Activated B cell treated with CpG ODN at 0.5 μM for 24 hours (primary cell): ENCODE measurements at regions of chr12 and their contacts with region 1.

Region 1: GRCh38 chr12:14910090-14910915 is 24.6 kb upstream of the MGP start:
- DNase-seq: no peak
- ATAC-seq: no peak
- H3K4me3 Mint-ChIP-seq: no peak overlapping the region
- H3K27ac Mint-ChIP-seq: no peak overlapping the region
- H3K4me1 Mint-ChIP-seq: peaks cover 4% of the 10 kb centered on the region
- H3K27me3 Mint-ChIP-seq: no peaks in the 10 kb centered on the region
- CTCF ChIP-seq: no peak

Region 2: GRCh38 chr12:14252697-14253096 is 657.6 kb before region 1 on chr12:
- CTCF ChIA-PET with region 1: no interaction called
- POLR2A ChIA-PET with region 1: interaction called, 10 read pairs
- intact Hi-C with region 1: no loop called
- DNase-seq: no peak
- ATAC-seq: no peak
- H3K4me3 Mint-ChIP-seq: no peak overlapping the region
- H3K27ac Mint-ChIP-seq: peak overlapping the region; percentile 56
- H3K4me1 Mint-ChIP-seq: peaks cover 51% of the 10 kb centered on the region
- H3K27me3 Mint-ChIP-seq: no peaks in the 10 kb centered on the region
- CTCF ChIP-seq: no peak

Region 3: DNA sequence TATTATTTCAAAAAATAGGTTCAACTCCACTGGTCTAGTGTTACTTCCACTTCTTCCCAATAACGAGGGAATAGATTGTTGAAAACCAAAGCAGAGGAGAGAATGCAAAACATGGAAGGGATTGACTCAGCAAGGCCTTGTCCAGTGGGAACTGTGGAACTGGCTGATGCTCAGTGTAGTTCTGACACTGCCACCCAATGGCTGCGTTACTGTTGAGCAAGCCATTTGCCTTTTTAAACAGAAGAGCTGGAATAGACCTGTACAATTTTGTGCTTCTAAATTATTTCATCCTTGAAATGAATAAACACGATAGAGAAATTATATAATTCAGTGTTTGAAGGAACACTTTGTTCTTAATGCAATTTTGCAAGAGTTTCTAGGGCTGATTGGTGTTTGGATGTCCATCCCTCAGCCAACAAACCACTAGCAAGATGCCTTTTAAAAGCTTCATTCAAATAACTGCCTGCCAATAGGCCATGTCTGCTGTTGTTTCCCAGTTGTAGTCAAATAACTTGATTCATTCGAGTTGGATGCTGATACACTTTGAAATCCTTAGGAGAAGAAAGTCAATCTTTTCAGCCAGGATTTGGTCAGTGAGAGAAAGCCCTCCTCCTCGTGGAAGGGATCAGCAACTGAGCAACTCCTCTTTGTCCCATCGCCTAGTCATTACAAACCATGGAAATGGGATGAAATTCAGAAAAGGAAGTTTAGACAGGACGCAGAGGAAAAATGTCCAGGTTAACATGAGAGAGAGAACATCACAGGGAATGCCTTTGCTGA is 17.4 kb before region 1 on chr12:
- CTCF ChIA-PET with region 1: no interaction called
- POLR2A ChIA-PET with region 1: no interaction called
- intact Hi-C with region 1: loop called (anchors 2 kb)
- DNase-seq: no peak
- ATAC-seq: no peak
- H3K4me3 Mint-ChIP-seq: no peak overlapping the region
- H3K27ac Mint-ChIP-seq: no peak overlapping the region
- H3K4me1 Mint-ChIP-seq: no peaks in the 10 kb centered on the region
- H3K27me3 Mint-ChIP-seq: peaks cover 6% of the 10 kb centered on the region
- CTCF ChIP-seq: no peak

Region 4: DNA sequence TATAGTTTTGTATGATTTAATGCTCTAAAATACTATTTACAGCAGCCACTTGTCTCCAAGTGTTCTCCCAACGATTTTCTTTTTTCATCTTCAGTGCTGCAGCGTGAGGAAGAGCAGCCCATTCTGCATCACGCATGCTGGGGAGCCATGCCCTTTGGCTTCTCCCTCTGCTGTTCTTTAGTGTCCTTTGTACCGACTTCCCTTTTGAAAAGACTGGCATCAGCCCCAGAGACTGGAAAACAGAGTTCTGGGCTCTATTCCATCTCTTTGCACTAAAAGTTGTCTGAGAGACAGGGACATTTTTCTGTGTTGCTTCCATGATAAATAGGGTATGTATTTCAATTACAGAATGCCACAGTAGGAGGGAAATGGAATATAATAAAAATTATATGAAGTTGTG is 205.8 kb after region 1 on chr12:
- CTCF ChIA-PET with region 1: no interaction called
- POLR2A ChIA-PET with region 1: no interaction called
- intact Hi-C with region 1: no loop called
- DNase-seq: no peak
- ATAC-seq: no peak
- H3K4me3 Mint-ChIP-seq: no peak overlapping the region
- H3K27ac Mint-ChIP-seq: no peak overlapping the region
- H3K4me1 Mint-ChIP-seq: no peaks in the 10 kb centered on the region
- H3K27me3 Mint-ChIP-seq: peaks cover 16% of the 10 kb centered on the region
- CTCF ChIP-seq: no peak